ENCODE measurements at regions of chr4 and their contacts with region 1.

Region 1: GRCh38 chr4:121823505-121824170 is at the start of gene CCNA2:
- DNase-seq: peak; percentile 99
- H3K4me3 Mint-ChIP-seq: peak within 1 kb of the TSS; percentile 98
- H3K27ac Mint-ChIP-seq: peak within 1 kb of the TSS; percentile 97
- H3K4me1 Mint-ChIP-seq: peaks cover 31% of the 10 kb centered on the region
- H3K27me3 Mint-ChIP-seq: no peaks in the 10 kb centered on the region
- total RNA-seq, gene CCNA2: 72.0 and 73.4 TPM in 2 replicates

Region 2: DNA sequence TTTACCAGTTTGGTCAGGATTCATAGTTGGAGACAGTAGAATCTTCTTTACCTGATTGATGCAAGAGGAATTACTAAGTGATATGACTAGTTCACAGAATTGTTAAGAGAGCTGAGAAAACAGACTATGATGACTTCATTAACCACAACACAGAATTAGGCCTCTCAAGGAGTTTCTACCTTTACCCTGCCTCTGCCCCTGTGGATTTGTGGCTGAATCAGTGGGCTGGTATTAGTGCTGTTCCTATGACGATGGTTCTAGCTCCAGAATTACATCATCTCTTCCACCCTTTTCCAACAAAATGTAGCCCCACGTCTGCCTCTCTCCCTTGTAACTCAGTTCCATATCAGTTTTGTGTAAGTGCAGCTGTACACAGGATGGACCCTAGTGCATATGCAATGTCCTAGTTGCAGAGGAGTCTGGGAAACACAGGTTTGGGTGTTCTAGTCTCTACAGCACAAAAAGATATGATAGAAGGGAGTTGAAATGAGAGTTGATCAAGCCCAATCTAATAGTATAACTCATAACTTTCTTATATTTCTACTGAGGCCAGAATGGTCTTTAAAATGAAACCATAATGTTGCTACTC is 226.2 kb before region 1 on chr4:
- intact Hi-C with region 1: no loop called
- DNase-seq: no peak
- H3K4me3 Mint-ChIP-seq: no peak overlapping the region
- H3K27ac Mint-ChIP-seq: no peak overlapping the region
- H3K4me1 Mint-ChIP-seq: no peaks in the 10 kb centered on the region
- H3K27me3 Mint-ChIP-seq: peaks cover 17% of the 10 kb centered on the region

Region 3: DNA sequence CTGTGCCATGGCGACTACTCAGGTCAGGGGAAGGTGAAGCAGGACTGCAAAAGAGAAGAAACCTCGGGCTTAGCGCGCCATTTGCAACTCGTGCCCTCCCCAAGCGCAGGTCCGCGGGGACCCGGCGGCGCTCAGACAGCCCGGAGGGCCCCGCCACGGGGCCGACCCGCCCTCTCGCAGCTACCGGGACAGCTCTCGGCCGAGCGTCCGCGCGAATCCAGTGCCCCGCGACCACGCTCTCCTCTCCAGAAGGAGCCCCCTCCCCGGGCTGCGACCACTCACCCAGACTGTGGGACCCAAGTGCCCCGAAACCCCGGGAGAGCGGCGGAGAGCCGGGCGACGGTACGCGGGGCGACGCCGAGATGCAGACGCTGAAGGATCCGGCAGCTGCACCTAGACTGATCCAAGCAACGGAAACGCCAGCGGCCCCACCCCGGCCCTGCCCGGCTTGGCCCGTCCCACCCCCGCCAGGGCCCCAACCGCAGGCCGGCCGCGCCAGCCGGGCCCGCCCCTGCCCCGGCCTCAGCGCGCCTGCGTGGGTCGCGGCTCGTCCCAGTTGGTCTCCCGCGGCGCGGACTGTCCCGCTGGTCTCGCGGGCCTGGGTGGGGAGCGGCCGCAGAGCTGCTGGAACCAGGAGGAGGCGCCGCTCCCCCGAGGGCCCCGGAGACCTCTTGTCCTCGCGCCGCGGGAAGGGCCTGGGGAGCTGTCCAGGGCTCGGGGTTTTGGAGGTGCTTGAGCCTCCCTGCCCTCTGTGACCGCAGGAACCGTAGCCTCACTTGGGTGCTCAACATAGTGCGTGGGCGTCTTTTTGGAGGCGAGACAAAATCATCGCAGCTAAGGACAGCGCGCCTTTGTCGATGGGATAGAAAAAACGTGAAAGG is 126.8 kb before region 1 on chr4 and contains the start of gene ANXA5:
- intact Hi-C with region 1: loop called (anchors 2 kb)
- DNase-seq: peak; percentile 94
- H3K4me3 Mint-ChIP-seq: peak within 1 kb of the TSS; percentile 98
- H3K27ac Mint-ChIP-seq: peak within 1 kb of the TSS; percentile 100
- H3K4me1 Mint-ChIP-seq: peaks cover 39% of the 10 kb centered on the region
- H3K27me3 Mint-ChIP-seq: peaks cover 33% of the 10 kb centered on the region
- total RNA-seq, gene ANXA5: 107 TPM in 2 replicates

Region 4: DNA sequence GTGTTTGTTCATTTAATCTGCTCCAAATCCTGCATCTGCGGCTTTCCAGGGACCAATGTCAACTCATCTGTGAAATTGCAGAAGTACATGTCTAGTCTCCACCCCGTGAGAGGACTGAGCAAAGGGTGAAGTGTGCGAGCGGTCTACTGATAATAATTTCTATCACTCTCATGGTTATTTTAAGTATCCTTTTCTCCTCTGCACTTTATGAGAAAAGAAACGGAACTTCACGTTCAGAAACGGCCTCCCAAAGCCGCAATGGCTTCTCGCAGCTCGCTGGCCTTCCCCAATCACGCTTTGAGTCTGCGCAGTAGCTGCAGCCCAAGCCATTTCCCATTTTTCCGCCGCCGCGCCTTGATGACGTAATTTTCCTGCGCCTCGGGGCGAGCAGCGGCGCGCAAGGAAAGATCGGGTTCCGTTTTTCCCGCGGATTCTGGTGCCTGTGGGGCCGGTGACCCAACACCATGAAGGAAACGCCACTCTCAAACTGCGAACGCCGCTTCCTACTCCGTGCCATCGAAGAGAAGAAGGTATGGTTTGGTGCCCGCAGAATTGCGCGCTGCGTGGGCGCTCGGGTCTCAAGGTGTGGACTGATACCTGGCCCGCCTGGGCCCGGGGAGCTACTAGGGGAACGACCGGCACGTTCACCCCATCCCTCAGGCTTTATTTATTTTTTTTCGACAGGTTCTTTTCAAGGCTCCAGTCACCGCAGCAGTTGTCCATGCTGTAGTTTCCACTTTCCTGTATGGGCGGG is 22.5 kb before region 1 on chr4 and contains the start of gene EXOSC9:
- intact Hi-C with region 1: loop called (anchors 1 kb)
- DNase-seq: peak; percentile 99
- H3K4me3 Mint-ChIP-seq: peak within 1 kb of the TSS; percentile 83
- H3K27ac Mint-ChIP-seq: peak within 1 kb of the TSS; percentile 96
- H3K4me1 Mint-ChIP-seq: peaks cover 47% of the 10 kb centered on the region
- H3K27me3 Mint-ChIP-seq: peaks cover 3% of the 10 kb centered on the region
- total RNA-seq, gene EXOSC9: 76.9 and 78.8 TPM in 2 replicates

Region 5: DNA sequence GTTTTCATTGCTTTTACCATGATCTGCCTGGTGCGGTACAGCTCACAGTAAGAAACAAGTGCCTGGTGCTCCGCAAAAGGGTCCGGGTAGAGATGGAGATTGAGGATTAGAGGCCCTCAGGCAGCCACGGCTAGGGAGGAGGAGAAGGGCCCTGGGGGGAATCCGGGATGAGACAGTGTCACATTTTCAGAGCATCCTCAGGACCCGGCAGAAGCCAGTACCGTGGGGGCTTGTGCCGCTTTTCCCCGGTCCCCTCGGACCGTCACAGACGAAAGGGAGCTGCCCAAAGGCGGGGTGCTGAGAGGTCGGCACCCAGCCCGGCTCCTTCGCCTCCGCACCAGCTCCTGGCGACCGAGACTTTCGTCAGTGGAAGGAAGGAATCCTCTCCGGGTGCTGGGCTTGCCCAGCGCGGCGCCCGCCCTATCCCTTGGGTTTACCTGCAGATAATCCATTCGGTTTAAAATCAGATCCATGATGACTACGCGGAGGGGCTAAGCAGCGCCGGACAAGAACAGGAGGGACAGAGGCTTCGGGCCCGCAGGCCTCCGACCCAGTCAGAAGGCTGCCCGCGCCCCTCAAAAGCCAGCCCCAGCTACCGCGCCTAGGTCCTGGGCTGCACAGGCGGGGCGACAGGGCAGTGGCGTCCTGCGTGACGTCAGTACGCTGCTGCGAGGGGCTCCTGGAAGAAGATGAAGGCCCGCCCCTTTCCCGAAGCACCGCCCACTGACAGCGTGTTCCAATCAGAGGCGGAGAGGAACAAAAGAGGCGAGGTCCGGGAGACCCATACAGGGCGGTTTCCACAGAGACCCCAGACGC is 46.4 kb after region 1 on chr4 and contains the start of gene BBS7:
- intact Hi-C with region 1: loop called (anchors 1 kb)
- DNase-seq: peak; percentile 99
- H3K4me3 Mint-ChIP-seq: peak within 1 kb of the TSS; percentile 98
- H3K27ac Mint-ChIP-seq: peak within 1 kb of the TSS; percentile 91
- H3K4me1 Mint-ChIP-seq: peaks cover 12% of the 10 kb centered on the region
- H3K27me3 Mint-ChIP-seq: peaks cover 12% of the 10 kb centered on the region
- total RNA-seq, gene BBS7: 18.3 and 18.7 TPM in 2 replicates